Ascending aorta (tissue), 2 donors: ENCODE measurements at regions of chr2 and their contacts with region 1.

Region 1: GRCh38 chr2:71226965-71227560 is at the start of gene PAIP2B:
- DNase-seq: peak; percentile 97 to 99
- H3K4me3 ChIP-seq: peak within 1 kb of the TSS; percentile 67 to 85
- H3K27ac ChIP-seq: peak within 1 kb of the TSS; percentile 46 to 80
- H3K4me1 ChIP-seq: peaks cover 0 to 13% of the 10 kb centered on the region in 2 donors
- H3K27me3 ChIP-seq: no peaks in the 10 kb centered on the region
- CTCF ChIP-seq: no peak
- total RNA-seq, gene PAIP2B: 0.32 TPM

Region 2: GRCh38 chr2:71130113-71130904 is 96.8 kb before region 1 on chr2 and contains the starts of genes MCEE and MPHOSPH10:
- intact Hi-C with region 1: loop called (anchors 1 kb)
- DNase-seq: peak; percentile 47 to 94
- H3K4me3 ChIP-seq: peak within 1 kb of the TSS; percentile 66 to 72
- H3K27ac ChIP-seq: peak within 1 kb of the TSS; percentile 84 to 94
- H3K4me1 ChIP-seq: peaks cover 0 to 17% of the 10 kb centered on the region in 2 donors
- H3K27me3 ChIP-seq: no peaks in the 10 kb centered on the region
- CTCF ChIP-seq: no peak
- total RNA-seq, gene MCEE: 2.0 TPM
- total RNA-seq, gene MPHOSPH10: 23.0 TPM

Region 3: GRCh38 chr2:71206271-71206670 is 20.8 kb before region 1 on chr2:
- intact Hi-C with region 1: no loop called
- DNase-seq: no peak
- H3K4me3 ChIP-seq: no peak overlapping the region
- H3K27ac ChIP-seq: no peak overlapping the region
- H3K4me1 ChIP-seq: no peaks in the 10 kb centered on the region
- H3K27me3 ChIP-seq: no peaks in the 10 kb centered on the region
- CTCF ChIP-seq: no peak

Region 4: GRCh38 chr2:71276311-71277146 is 49.5 kb after region 1 on chr2:
- intact Hi-C with region 1: loop called (anchors 1 kb)
- DNase-seq: peak; percentile 62 to 88
- H3K4me3 ChIP-seq: peak overlapping the region; percentile 56 to 74
- H3K27ac ChIP-seq: peak overlapping the region; percentile 62 to 72
- H3K4me1 ChIP-seq: peaks cover 9 to 12% of the 10 kb centered on the region in 2 donors
- H3K27me3 ChIP-seq: no peaks in the 10 kb centered on the region
- CTCF ChIP-seq: peak in 1 of 3 experiments; percentile 16

Region 5: DNA sequence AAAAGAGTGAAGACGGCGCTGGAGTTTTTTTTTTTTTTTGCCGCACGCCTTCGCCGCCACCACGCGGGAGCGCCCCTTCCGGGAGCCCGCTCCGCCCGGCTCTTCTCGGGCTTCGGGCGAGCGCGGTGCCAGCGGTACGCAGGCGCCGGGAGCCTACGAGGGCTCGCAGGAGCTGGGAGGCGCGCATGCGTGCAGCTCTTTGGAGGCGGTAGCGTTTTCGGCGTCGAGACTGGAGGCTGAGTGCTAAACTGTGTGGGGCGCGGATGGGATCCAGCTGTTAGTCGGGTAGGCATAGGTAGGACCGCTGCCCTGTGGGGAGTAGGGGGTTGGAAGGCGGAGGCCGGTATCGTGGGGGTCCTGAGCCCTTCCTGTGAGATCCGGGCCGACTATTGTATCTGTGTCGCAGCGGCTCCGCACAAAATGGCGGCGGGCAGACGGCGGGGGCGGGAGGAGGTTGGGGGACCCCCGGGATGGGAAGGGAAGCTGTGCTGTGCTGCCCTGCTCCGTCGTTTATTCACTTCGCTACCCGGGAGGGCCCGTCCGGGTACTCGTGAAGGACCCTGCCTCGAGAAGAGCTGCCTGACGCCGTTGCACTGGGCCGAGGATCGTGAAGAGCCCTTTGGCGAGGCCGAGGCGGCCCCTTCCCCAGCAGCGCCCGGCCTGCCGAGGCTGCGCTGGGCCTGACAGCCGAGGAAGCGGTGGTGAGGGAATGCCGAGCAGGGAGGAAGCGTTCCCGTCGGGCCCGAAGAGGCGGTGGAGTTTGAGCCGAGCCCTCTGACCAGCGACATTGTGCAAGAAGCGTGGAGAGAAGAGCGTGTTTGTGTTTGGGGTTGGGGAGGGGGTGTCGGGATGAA is 104.7 kb after region 1 on chr2 and contains the start of gene ZNF638:
- intact Hi-C with region 1: loop called (anchors 1 kb)
- DNase-seq: peak; percentile 66 to 94
- H3K4me3 ChIP-seq: peak within 1 kb of the TSS; percentile 67 to 93
- H3K27ac ChIP-seq: peak within 1 kb of the TSS; percentile 79 to 93
- H3K4me1 ChIP-seq: peaks cover 4 to 20% of the 10 kb centered on the region in 2 donors
- H3K27me3 ChIP-seq: no peaks in the 10 kb centered on the region
- CTCF ChIP-seq: peak; percentile 63 to 81 (median 81)
- total RNA-seq, gene ZNF638: 56.0 TPM